IMR-90 (cell line): ENCODE measurements at regions of chr9 and their contacts with region 1.

Region 1: GRCh38 chr9:130290291-130291181 is 25.0 kb downstream of the HMCN2 start:
- DNase-seq: no peak
- ATAC-seq: no peak; the same call in 1 of the 2 replicates
- H3K4me3 ChIP-seq: no peak overlapping the region
- H3K27ac ChIP-seq: no peak overlapping the region
- H3K4me1 ChIP-seq: peaks cover 3% of the 10 kb centered on the region; the same call in 1 of the 2 replicates
- H3K27me3 ChIP-seq: peaks cover 80% of the 10 kb centered on the region
- CTCF ChIP-seq: no peak
- POLR2A ChIP-seq: no peak
- RAD21 ChIP-seq: no peak

Region 2: DNA sequence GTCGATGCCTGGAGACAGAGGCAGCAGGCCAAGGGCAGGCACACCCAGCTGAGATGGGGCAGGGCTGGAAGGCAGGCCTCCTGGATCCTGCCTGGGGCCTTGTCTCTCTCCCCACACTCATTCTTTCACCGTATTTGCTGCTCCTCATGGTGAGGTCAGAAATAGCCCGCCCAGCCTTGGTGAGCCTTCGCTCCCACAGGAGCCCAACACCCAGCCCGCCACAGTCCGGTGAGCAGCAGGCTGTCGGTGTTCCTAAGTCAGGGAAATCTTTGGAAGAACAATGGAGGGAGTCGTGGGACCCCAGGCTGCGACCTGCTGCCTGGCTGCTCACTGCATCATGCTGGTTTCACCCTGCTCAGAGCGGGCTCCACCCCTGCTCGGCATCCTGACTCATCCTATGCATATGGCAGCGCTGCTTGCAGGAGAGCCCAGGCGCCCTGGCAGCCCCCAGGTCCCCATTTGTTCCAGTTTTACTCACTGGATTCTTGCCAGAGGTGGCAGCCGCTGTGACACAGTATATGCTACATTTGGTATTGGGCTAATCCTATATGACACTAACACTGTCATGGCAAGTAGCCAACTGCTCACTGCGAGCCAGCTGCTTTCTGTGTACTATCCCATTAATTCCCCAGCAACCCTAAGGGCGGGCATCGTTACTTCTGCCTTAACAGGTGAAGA is 171.6 kb before region 1 on chr9:
- CTCF ChIA-PET with region 1: no interaction called
- POLR2A ChIA-PET with region 1: interaction called, 18 read pairs
- dilution Hi-C with region 1: no loop called
- in situ Hi-C with region 1: no loop called
- intact Hi-C with region 1: no loop called
- DNase-seq: peak; percentile 60
- ATAC-seq: peak; percentile 46
- H3K4me3 ChIP-seq: no peak overlapping the region
- H3K27ac ChIP-seq: no peak overlapping the region
- H3K4me1 ChIP-seq: peaks cover 24% of the 10 kb centered on the region
- H3K27me3 ChIP-seq: no peaks in the 10 kb centered on the region
- CTCF ChIP-seq: no peak
- POLR2A ChIP-seq: no peak
- RAD21 ChIP-seq: no peak

Region 3: DNA sequence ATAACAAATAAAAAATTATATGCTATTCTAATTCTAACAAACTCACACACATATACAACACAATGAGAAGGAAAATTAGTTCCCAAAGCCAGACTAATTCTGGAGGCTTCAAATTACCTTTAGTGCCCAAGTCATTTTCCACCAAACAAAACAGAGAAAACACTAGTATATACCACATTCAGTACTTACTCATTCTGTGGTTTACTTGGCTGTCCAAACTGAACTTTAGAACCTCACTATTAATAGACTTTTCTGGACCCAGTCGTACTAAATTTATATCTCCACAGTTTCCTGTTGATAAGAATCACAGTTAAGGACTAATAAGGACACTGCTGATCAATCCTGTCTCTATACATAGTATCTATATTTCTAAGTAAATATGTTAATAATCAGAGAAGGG is 1997.8 kb after region 1 on chr9:
- CTCF ChIA-PET with region 1: no interaction called
- POLR2A ChIA-PET with region 1: interaction called, 13 read pairs
- dilution Hi-C with region 1: no loop called
- in situ Hi-C with region 1: no loop called
- intact Hi-C with region 1: no loop called
- DNase-seq: peak; percentile 77
- ATAC-seq: peak; percentile 59
- H3K4me3 ChIP-seq: no peak overlapping the region
- H3K27ac ChIP-seq: no peak overlapping the region
- H3K4me1 ChIP-seq: peaks cover 13% of the 10 kb centered on the region
- H3K27me3 ChIP-seq: no peaks in the 10 kb centered on the region
- CTCF ChIP-seq: no peak
- POLR2A ChIP-seq: no peak
- RAD21 ChIP-seq: no peak